ENCODE measurements at regions of chr3 and their contacts with region 1.

Region 1: GRCh38 chr3:48439820-48440589 is at the starts of genes CCDC51 and TMA7:
- DNase-seq: peak; percentile 99
- total RNA-seq, gene CCDC51: 8.9 TPM
- total RNA-seq, gene TMA7: 192 TPM

Region 2: DNA sequence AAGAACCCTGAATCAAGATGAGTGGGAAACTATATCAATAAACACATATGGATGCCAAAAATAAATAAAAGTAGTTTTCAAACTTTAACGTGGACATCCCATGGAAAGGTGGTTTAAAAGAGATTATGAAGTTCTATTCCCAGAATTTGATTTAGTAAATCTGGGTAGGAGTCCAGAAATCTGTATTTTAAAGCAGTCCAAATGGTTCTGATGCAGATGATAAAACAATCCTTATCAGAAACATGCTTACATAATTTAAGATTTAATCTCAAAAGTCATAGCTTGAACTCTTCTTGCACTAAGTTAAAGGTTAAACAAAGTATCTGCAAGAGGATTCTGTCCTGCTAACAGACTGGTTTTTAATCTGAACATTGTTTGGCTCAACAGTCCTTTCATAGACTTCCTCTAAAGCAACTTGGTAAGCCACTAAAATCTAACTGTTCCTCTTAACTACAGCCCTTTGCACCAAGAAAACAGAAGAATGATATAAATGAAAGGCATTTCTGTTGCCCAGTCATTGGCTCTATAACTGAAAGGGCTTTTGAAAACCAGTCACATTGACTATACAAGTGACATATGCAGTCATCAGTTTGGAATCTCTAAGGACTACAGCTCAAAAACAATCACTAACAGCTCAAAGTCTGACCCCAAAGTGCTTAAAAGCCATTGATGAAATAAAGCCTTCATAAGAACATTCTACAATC is 400.4 kb before region 1 on chr3:
- intact Hi-C with region 1: no loop called
- DNase-seq: no peak

Region 3: GRCh38 chr3:48232734-48233133 is 207.3 kb before region 1 on chr3:
- intact Hi-C with region 1: loop called (anchors 5 kb)
- DNase-seq: no peak

Region 4: GRCh38 chr3:48273594-48274211 is 166.3 kb before region 1 on chr3:
- intact Hi-C with region 1: loop called (anchors 2 kb)
- DNase-seq: no peak

Region 5: GRCh38 chr3:48318783-48319468 is 121.1 kb before region 1 on chr3:
- intact Hi-C with region 1: no loop called
- DNase-seq: no peak

Region 6: DNA sequence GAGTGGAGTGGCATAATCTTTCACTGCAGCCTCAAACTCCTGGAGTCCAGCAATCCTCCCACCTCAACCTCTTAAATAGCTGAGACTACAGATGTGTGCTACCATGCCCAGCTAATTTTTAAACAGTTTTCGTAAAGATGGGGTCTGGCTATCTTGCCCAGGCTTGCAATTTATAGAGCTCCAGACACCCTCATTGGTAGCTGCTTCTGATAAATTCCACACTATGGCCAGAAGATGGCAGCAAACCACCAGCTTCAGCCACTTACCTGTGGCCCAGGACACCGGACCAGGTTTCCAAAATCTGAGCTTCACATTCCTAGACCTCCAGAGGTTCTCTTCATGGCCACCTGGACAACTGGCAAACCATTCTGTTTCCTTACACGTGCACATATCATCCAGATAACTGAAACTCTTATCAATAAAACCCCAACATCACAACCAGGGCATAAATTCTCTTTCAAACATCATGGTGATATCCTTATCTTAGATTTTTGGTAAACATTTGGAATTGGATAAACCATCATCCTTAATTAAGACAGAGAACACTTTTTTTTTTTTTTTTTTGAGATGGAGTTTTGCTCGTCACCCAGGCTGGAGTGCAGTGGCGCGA is 39.1 kb before region 1 on chr3:
- intact Hi-C with region 1: loop called (anchors 1 kb)
- DNase-seq: peak; percentile 75

Measured in cardiac septum (tissue), 1 donor.